B cell (primary cell): ENCODE measurements at regions of chr2 and their contacts with region 1.

Region 1: GRCh38 chr2:229800997-229801754 is 86.8 kb upstream of the DNER start:
- DNase-seq: peak; percentile 69
- ATAC-seq: no peak
- H3K4me3 ChIP-seq: no peak overlapping the region
- H3K4me3 Mint-ChIP-seq: no peak overlapping the region
- H3K27ac ChIP-seq: no peak overlapping the region
- H3K27ac Mint-ChIP-seq: no peak overlapping the region
- H3K4me1 ChIP-seq: no peaks in the 10 kb centered on the region
- H3K4me1 Mint-ChIP-seq: no peaks in the 10 kb centered on the region
- H3K27me3 ChIP-seq: no peaks in the 10 kb centered on the region
- H3K27me3 Mint-ChIP-seq: no peaks in the 10 kb centered on the region
- CTCF ChIP-seq: peak; percentile 88

Region 2: DNA sequence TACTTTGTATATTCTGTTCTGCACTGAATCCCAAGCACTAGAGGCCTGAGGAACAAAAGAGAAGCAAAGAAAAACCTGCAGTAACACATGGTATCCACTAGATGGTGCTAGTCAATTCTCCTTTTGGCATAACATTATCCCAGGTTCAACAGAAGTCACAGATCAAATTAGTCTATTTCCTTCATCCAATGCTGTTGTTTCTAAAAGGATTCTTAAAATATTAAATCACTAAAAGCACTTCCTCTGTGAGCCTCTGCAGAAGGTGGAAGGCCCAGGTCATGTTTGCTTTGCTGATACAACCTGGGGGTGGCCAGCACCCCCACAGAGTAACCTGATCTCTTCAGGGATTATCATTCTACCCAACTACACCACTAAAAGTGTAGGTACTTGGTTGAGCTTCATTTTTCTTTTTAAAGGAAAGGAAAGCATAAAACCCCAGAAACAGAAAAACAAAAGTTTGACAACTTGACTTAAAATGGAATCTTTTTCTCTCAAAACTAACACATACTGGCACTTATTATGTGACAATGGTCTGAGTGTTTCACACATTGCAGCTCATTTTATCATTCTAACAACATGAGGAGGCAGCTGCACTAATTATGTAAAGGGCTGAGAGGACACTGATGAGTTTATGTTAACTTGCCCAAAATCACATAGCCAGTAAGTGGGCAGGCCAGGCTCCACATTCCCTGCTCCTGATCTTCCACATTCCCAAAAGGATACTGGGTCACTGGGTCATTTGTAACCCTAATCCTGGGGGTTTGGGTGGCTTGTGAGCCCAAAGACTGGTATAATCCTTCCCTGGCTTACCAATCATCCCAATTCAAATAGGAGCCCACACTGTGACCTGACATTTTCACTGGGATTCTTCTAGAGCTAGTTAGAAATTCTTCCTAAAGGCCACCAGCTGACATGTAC is 20.1 kb before region 1 on chr2:
- CTCF ChIA-PET with region 1: interaction called, 42 read pairs
- POLR2A ChIA-PET with region 1: interaction called, 4 read pairs
- intact Hi-C with region 1: no loop called
- DNase-seq: peak; percentile 52
- ATAC-seq: peak; percentile 70
- H3K4me3 ChIP-seq: no peak overlapping the region
- H3K4me3 Mint-ChIP-seq: no peak overlapping the region
- H3K27ac ChIP-seq: peak overlapping the region in 1 of 2 donors; percentile 28
- H3K27ac Mint-ChIP-seq: peak overlapping the region; percentile 26
- H3K4me1 ChIP-seq: peaks cover 7 to 11% of the 10 kb centered on the region in 2 donors
- H3K4me1 Mint-ChIP-seq: peaks cover 19% of the 10 kb centered on the region
- H3K27me3 ChIP-seq: no peaks in the 10 kb centered on the region
- H3K27me3 Mint-ChIP-seq: no peaks in the 10 kb centered on the region
- CTCF ChIP-seq: peak; percentile 97

Region 3: GRCh38 chr2:229815858-229816257 is 14.7 kb after region 1 on chr2:
- CTCF ChIA-PET with region 1: interaction called, 10 read pairs
- POLR2A ChIA-PET with region 1: no interaction called
- intact Hi-C with region 1: no loop called
- DNase-seq: no peak
- ATAC-seq: no peak
- H3K4me3 ChIP-seq: no peak overlapping the region
- H3K4me3 Mint-ChIP-seq: no peak overlapping the region
- H3K27ac ChIP-seq: no peak overlapping the region
- H3K27ac Mint-ChIP-seq: no peak overlapping the region
- H3K4me1 ChIP-seq: no peaks in the 10 kb centered on the region
- H3K4me1 Mint-ChIP-seq: peaks cover 6% of the 10 kb centered on the region
- H3K27me3 ChIP-seq: no peaks in the 10 kb centered on the region
- H3K27me3 Mint-ChIP-seq: no peaks in the 10 kb centered on the region
- CTCF ChIP-seq: no peak

Region 4: GRCh38 chr2:229869226-229869625 is 68.0 kb after region 1 on chr2:
- CTCF ChIA-PET with region 1: interaction called, 3 read pairs
- POLR2A ChIA-PET with region 1: interaction called, 3 read pairs
- intact Hi-C with region 1: loop called (anchors 10 kb)
- DNase-seq: no peak
- ATAC-seq: no peak
- H3K4me3 ChIP-seq: no peak overlapping the region
- H3K4me3 Mint-ChIP-seq: no peak overlapping the region
- H3K27ac ChIP-seq: no peak overlapping the region
- H3K27ac Mint-ChIP-seq: no peak overlapping the region
- H3K4me1 ChIP-seq: peaks cover 7 to 8% of the 10 kb centered on the region in 2 donors
- H3K4me1 Mint-ChIP-seq: peaks cover 47% of the 10 kb centered on the region
- H3K27me3 ChIP-seq: no peaks in the 10 kb centered on the region
- H3K27me3 Mint-ChIP-seq: no peaks in the 10 kb centered on the region
- CTCF ChIP-seq: no peak

Region 5: GRCh38 chr2:229910832-229911412 is 109.7 kb after region 1 on chr2:
- CTCF ChIA-PET with region 1: interaction called, 63 read pairs
- POLR2A ChIA-PET with region 1: no interaction called
- intact Hi-C with region 1: loop called (anchors 1 kb)
- DNase-seq: peak; percentile 63
- ATAC-seq: peak; percentile 79
- H3K4me3 ChIP-seq: no peak overlapping the region
- H3K4me3 Mint-ChIP-seq: peak overlapping the region; percentile 10
- H3K27ac ChIP-seq: peak overlapping the region; percentile 35 to 59
- H3K27ac Mint-ChIP-seq: peak overlapping the region; percentile 54
- H3K4me1 ChIP-seq: peaks cover 26 to 32% of the 10 kb centered on the region in 2 donors
- H3K4me1 Mint-ChIP-seq: peaks cover 54% of the 10 kb centered on the region
- H3K27me3 ChIP-seq: no peaks in the 10 kb centered on the region
- H3K27me3 Mint-ChIP-seq: no peaks in the 10 kb centered on the region
- CTCF ChIP-seq: peak; percentile 71

Region 6: DNA sequence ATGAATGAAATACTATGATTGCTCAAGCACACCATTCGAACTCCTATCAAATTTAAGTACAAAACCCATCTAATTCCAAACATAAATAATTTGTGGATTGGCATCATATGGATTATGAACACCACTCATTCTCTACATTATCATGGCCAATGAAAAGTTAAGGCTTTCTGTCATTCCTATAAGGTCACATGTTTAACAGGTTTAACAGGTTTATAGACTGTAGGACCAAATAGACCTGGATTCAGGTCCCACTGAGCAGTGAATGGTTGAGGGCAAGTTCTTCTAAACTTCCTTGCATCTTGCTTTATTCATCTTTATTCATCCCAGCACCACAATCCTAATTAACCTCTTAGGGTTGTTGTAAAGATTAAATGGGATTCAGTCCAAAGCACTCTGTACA is 154.5 kb after region 1 on chr2:
- CTCF ChIA-PET with region 1: no interaction called
- POLR2A ChIA-PET with region 1: no interaction called
- intact Hi-C with region 1: no loop called
- DNase-seq: no peak
- ATAC-seq: no peak
- H3K4me3 ChIP-seq: no peak overlapping the region
- H3K4me3 Mint-ChIP-seq: no peak overlapping the region
- H3K27ac ChIP-seq: no peak overlapping the region
- H3K27ac Mint-ChIP-seq: no peak overlapping the region
- H3K4me1 ChIP-seq: no peaks in the 10 kb centered on the region
- H3K4me1 Mint-ChIP-seq: no peaks in the 10 kb centered on the region
- H3K27me3 ChIP-seq: no peaks in the 10 kb centered on the region
- H3K27me3 Mint-ChIP-seq: no peaks in the 10 kb centered on the region
- CTCF ChIP-seq: no peak

Region 7: GRCh38 chr2:230134496-230135129 is 333.4 kb after region 1 on chr2:
- CTCF ChIA-PET with region 1: no interaction called
- POLR2A ChIA-PET with region 1: no interaction called
- intact Hi-C with region 1: no loop called
- DNase-seq: no peak
- ATAC-seq: no peak
- H3K4me3 ChIP-seq: no peak overlapping the region
- H3K4me3 Mint-ChIP-seq: no peak overlapping the region
- H3K27ac ChIP-seq: peak overlapping the region in 1 of 2 donors; percentile 35
- H3K27ac Mint-ChIP-seq: no peak overlapping the region
- H3K4me1 ChIP-seq: peaks cover 7 to 10% of the 10 kb centered on the region in 2 donors
- H3K4me1 Mint-ChIP-seq: no peaks in the 10 kb centered on the region
- H3K27me3 ChIP-seq: no peaks in the 10 kb centered on the region
- H3K27me3 Mint-ChIP-seq: no peaks in the 10 kb centered on the region
- CTCF ChIP-seq: no peak

Region 8: GRCh38 chr2:230160112-230160660 is 359.0 kb after region 1 on chr2:
- CTCF ChIA-PET with region 1: interaction called, 11 read pairs
- POLR2A ChIA-PET with region 1: no interaction called
- intact Hi-C with region 1: loop called (anchors 1 kb)
- DNase-seq: peak; percentile 71
- ATAC-seq: peak; percentile 63
- H3K4me3 ChIP-seq: no peak overlapping the region
- H3K4me3 Mint-ChIP-seq: no peak overlapping the region
- H3K27ac ChIP-seq: no peak overlapping the region
- H3K27ac Mint-ChIP-seq: peak overlapping the region; percentile 15
- H3K4me1 ChIP-seq: peaks cover 0 to 15% of the 10 kb centered on the region in 2 donors
- H3K4me1 Mint-ChIP-seq: peaks cover 21% of the 10 kb centered on the region
- H3K27me3 ChIP-seq: no peaks in the 10 kb centered on the region
- H3K27me3 Mint-ChIP-seq: no peaks in the 10 kb centered on the region
- CTCF ChIP-seq: peak; percentile 89

Region 9: GRCh38 chr2:230798769-230799399 is 997.7 kb after region 1 on chr2:
- CTCF ChIA-PET with region 1: interaction called, 9 read pairs
- POLR2A ChIA-PET with region 1: no interaction called
- intact Hi-C with region 1: loop called (anchors 2 kb)
- DNase-seq: peak; percentile 61
- ATAC-seq: no peak
- H3K4me3 ChIP-seq: no peak overlapping the region
- H3K4me3 Mint-ChIP-seq: no peak overlapping the region
- H3K27ac ChIP-seq: no peak overlapping the region
- H3K27ac Mint-ChIP-seq: peak overlapping the region; percentile 44
- H3K4me1 ChIP-seq: peaks cover 26 to 29% of the 10 kb centered on the region in 2 donors
- H3K4me1 Mint-ChIP-seq: peaks cover 18% of the 10 kb centered on the region
- H3K27me3 ChIP-seq: no peaks in the 10 kb centered on the region
- H3K27me3 Mint-ChIP-seq: no peaks in the 10 kb centered on the region
- CTCF ChIP-seq: peak; percentile 80